ENCODE measurements at regions of chr10 and their contacts with region 1.

Region 1: GRCh38 chr10:117320050-117320665 is 55.1 kb downstream of the PDZD8 start:
- DNase-seq: no peak
- H3K4me3 ChIP-seq: no peak overlapping the region
- H3K27ac ChIP-seq: no peak overlapping the region
- H3K27me3 ChIP-seq: no peaks in the 10 kb centered on the region
- CTCF ChIP-seq: peak; percentile 67

Region 2: GRCh38 chr10:117014835-117015234 is 305.3 kb before region 1 on chr10:
- CTCF ChIA-PET with region 1: no interaction called
- POLR2A ChIA-PET with region 1: no interaction called
- DNase-seq: no peak
- H3K4me3 ChIP-seq: no peak overlapping the region
- H3K27ac ChIP-seq: no peak overlapping the region
- H3K27me3 ChIP-seq: no peaks in the 10 kb centered on the region
- CTCF ChIP-seq: no peak

Region 3: DNA sequence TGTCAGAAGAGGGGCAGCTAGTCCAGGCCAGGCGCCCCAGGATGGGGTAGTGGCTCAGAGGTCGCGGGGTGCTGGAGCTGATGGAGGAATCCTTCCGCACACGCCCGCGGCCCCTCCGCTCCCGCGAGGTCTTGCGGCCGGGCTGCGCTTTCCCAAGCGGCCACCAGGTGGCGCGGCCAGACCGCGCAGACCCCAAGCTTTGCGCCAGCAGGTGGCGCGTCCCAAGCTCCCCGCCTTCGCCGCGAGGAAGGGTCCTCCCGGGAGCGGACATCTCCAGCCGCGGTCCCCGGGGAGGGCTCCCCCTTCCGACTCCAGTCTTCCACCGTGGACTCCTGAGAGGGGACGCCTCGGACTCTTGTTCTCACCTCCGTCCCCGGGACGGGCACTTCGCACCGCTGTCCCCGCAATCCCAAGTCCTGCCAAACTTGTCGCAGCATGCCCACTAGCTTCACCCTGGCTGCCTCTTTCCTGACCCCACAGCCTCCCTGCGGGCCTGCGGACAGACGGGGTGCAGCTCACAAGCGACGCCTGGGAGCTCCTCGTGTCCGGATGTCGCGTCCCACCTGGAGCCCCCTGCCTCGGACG is 103.5 kb before region 1 on chr10:
- CTCF ChIA-PET with region 1: interaction called, 246 read pairs
- POLR2A ChIA-PET with region 1: interaction called, 5 read pairs
- DNase-seq: peak; percentile 29
- H3K4me3 ChIP-seq: peak overlapping the region; percentile 67
- H3K27ac ChIP-seq: no peak overlapping the region
- H3K27me3 ChIP-seq: peaks cover 10% of the 10 kb centered on the region
- CTCF ChIP-seq: peak; percentile 100

Region 4: GRCh38 chr10:117277675-117278074 is 42.5 kb before region 1 on chr10:
- CTCF ChIA-PET with region 1: interaction called, 13 read pairs
- POLR2A ChIA-PET with region 1: no interaction called
- DNase-seq: no peak
- H3K4me3 ChIP-seq: no peak overlapping the region
- H3K27ac ChIP-seq: no peak overlapping the region
- H3K27me3 ChIP-seq: no peaks in the 10 kb centered on the region
- CTCF ChIP-seq: no peak

Region 5: GRCh38 chr10:117300671-117301070 is 19.5 kb before region 1 on chr10:
- CTCF ChIA-PET with region 1: interaction called, 10 read pairs
- POLR2A ChIA-PET with region 1: no interaction called
- DNase-seq: no peak
- H3K4me3 ChIP-seq: no peak overlapping the region
- H3K27ac ChIP-seq: no peak overlapping the region
- H3K27me3 ChIP-seq: no peaks in the 10 kb centered on the region
- CTCF ChIP-seq: no peak

Region 6: DNA sequence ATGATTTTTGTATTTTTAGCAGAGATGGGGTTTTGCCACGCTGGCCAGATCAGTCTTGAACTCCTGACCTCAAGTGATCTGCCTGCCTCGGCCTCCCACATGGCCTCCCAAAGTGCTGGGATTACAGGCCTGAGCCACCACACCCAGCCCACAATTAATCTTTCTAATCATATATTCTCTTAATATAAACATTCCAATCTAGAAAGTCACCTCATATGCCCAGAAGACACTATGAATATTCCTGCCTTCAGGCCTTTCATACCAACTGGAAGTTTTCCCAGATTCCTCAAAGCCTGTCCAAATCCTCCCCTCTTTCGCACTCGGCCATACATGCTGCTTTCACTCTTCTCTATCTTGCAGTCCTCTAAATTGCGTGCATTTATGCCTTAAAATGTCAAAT is 22.5 kb after region 1 on chr10:
- CTCF ChIA-PET with region 1: interaction called, 24 read pairs
- POLR2A ChIA-PET with region 1: no interaction called
- DNase-seq: peak; percentile 45
- H3K4me3 ChIP-seq: peak overlapping the region; percentile 18; the same call in 1 of the 2 replicates
- H3K27ac ChIP-seq: peak overlapping the region; percentile 59
- H3K27me3 ChIP-seq: no peaks in the 10 kb centered on the region
- CTCF ChIP-seq: no peak

Region 7: DNA sequence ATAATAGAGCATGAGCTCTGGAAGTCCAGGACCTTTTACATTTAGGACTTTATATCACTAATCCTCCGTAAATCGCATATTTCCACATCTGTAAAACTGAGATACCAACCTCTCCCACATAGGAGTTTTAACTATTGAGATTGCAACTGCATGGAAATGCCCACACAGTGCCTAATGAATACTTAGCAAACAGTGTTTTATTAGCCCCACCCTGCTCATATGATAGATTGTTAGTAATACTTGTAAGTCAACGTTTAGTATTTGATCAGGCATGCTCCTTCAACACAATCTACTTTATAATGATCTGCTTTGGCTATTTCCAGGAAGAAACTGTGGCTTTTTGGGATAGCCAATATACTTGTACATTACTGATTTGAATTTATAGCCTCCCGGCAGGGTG is 46.6 kb after region 1 on chr10:
- CTCF ChIA-PET with region 1: interaction called, 10 read pairs
- POLR2A ChIA-PET with region 1: interaction called, 3 read pairs
- DNase-seq: no peak
- H3K4me3 ChIP-seq: no peak overlapping the region
- H3K27ac ChIP-seq: no peak overlapping the region
- H3K27me3 ChIP-seq: no peaks in the 10 kb centered on the region
- CTCF ChIP-seq: no peak

Region 8: GRCh38 chr10:117541909-117542705 is 221.9 kb after region 1 on chr10:
- CTCF ChIA-PET with region 1: no interaction called
- POLR2A ChIA-PET with region 1: no interaction called
- DNase-seq: no peak
- H3K4me3 ChIP-seq: no peak overlapping the region
- H3K27ac ChIP-seq: no peak overlapping the region
- H3K27me3 ChIP-seq: peaks cover 94% of the 10 kb centered on the region
- CTCF ChIP-seq: no peak

Region 9: GRCh38 chr10:117699436-117700075 is 379.4 kb after region 1 on chr10:
- CTCF ChIA-PET with region 1: no interaction called
- POLR2A ChIA-PET with region 1: no interaction called
- DNase-seq: no peak
- H3K4me3 ChIP-seq: no peak overlapping the region
- H3K27ac ChIP-seq: no peak overlapping the region
- H3K27me3 ChIP-seq: no peaks in the 10 kb centered on the region
- CTCF ChIP-seq: no peak

Region 10: DNA sequence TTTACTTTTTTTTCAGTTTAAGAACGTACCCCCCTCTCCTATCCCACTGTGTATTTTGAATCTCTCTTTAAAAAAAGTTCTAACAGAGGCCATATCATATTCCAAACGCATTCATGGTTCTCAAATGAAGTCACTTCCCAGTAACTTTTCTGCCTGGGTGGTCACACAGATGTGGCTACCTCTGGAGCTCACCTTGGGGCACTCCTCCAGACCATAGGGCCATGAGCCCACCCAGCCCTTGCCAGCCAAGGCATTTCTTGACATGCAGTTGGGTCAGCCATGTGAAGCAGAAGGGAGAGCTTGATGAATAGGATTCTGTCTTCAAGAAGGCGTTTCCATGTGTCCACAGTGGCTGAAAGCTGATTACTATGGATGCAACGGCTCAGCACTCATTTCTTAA is 487.3 kb after region 1 on chr10:
- CTCF ChIA-PET with region 1: no interaction called
- POLR2A ChIA-PET with region 1: no interaction called
- DNase-seq: no peak
- H3K4me3 ChIP-seq: no peak overlapping the region
- H3K27ac ChIP-seq: no peak overlapping the region
- H3K27me3 ChIP-seq: no peaks in the 10 kb centered on the region
- CTCF ChIP-seq: no peak

Measured in AG04450 (cell line).